ENCODE measurements at regions of chr2 and their contacts with region 1.

Region 1: GRCh38 chr2:229133155-229133772 is 137.8 kb downstream of the PID1 start:
- DNase-seq: peak; percentile 53
- H3K4me3 ChIP-seq: no peak overlapping the region
- H3K27ac ChIP-seq: no peak overlapping the region
- H3K4me1 ChIP-seq: no peaks in the 10 kb centered on the region
- H3K27me3 ChIP-seq: no peaks in the 10 kb centered on the region
- CTCF ChIP-seq: peak; percentile 22

Region 2: GRCh38 chr2:228927028-228928010 is 205.9 kb before region 1 on chr2:
- intact Hi-C with region 1: no loop called
- DNase-seq: no peak
- H3K4me3 ChIP-seq: no peak overlapping the region
- H3K27ac ChIP-seq: no peak overlapping the region
- H3K4me1 ChIP-seq: no peaks in the 10 kb centered on the region
- H3K27me3 ChIP-seq: no peaks in the 10 kb centered on the region
- CTCF ChIP-seq: no peak

Region 3: DNA sequence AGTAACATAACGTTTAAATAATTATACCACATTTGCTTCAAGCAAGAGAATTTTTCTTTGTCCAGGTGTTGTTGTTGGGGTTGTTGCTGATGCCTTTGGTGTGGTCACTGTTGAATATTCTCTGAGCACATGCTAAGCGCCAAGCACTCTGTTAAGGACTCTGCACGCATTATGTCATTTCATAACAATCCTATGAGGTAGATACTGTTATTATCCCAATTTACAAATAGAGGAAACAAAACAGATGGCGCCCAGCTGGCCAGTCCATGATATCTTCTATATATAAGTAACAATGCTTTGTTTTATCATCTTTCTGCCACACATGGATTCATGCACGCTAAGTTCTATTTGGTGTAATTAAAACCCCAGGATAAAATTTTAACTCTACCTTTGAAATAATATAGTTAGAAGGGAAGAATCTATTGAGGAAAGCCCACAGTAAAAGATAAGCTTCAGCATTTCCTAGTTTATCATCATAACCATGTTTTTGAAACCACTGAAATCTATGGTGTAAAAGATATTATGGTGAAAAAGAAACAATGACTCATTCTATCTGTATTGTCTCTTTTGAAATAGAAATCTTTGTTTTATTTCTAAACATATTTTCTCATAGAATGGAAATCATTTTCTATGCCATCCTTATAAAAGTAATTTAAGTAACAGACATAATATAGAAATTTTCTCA is 61.8 kb before region 1 on chr2:
- intact Hi-C with region 1: no loop called
- DNase-seq: no peak
- H3K4me3 ChIP-seq: no peak overlapping the region
- H3K27ac ChIP-seq: no peak overlapping the region
- H3K4me1 ChIP-seq: no peaks in the 10 kb centered on the region
- H3K27me3 ChIP-seq: no peaks in the 10 kb centered on the region
- CTCF ChIP-seq: no peak

Region 4: DNA sequence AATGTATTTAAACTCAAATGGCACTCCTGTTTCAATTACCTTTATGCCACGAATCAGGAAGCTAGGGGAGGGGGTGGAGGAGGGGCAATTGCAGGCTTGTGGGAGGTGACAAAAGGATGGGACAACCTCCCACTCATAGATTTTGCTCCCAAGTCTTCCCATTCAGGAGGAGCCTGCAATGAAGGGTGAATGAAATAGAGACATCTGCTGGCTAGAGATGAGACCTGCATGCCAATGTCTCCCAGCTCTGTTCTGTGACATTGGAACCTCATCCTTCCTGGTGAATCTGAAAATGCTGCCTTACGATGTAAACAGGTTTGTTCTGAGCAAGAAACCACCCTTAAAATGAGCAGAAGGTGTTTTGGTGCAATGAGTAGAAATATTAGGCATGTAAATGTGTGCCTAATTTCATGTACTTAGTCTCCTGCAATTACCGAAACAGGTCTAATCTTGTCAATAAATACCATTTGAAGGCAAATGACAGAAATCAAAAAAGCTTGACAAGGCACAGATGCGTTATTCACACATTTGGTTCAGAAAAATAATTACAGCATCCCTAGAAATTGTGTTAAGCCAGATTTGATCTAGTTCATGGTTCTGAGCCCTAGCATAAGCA is 140.6 kb after region 1 on chr2:
- intact Hi-C with region 1: loop called (anchors 5 kb)
- DNase-seq: peak; percentile 92
- H3K4me3 ChIP-seq: no peak overlapping the region
- H3K27ac ChIP-seq: peak overlapping the region; percentile 69
- H3K4me1 ChIP-seq: peaks cover 2% of the 10 kb centered on the region
- H3K27me3 ChIP-seq: no peaks in the 10 kb centered on the region
- CTCF ChIP-seq: peak; percentile 64

Region 5: DNA sequence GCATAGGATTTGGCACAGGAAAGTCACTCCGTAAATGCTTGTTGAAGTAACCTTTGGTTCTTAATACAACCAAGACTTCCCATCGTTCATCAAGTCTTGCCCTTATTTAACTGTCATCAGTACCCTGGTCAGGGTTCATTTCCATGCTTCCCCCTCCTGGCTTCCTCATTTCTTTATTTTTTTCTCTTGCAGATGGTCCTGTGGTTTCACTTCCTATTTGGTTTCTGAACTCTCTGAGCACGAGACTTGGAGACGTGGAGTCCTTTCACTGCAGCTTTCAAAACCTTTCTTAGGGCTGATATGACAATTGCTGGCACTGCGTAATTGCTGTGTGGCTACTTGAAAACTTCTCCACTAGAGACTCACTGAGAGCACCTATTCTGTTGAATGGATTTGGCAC is 197.7 kb after region 1 on chr2:
- intact Hi-C with region 1: no loop called
- DNase-seq: no peak
- H3K4me3 ChIP-seq: no peak overlapping the region
- H3K27ac ChIP-seq: no peak overlapping the region
- H3K4me1 ChIP-seq: no peaks in the 10 kb centered on the region
- H3K27me3 ChIP-seq: no peaks in the 10 kb centered on the region
- CTCF ChIP-seq: no peak

Region 6: GRCh38 chr2:229586746-229587705 is 453.8 kb after region 1 on chr2:
- intact Hi-C with region 1: loop called (anchors 5 kb)
- DNase-seq: peak; percentile 72
- H3K4me3 ChIP-seq: no peak overlapping the region
- H3K27ac ChIP-seq: no peak overlapping the region
- H3K4me1 ChIP-seq: no peaks in the 10 kb centered on the region
- H3K27me3 ChIP-seq: no peaks in the 10 kb centered on the region
- CTCF ChIP-seq: peak; percentile 68